Right ventricle myocardium superior (tissue), 1 donor: ENCODE measurements at regions of chr14 and their contacts with region 1.

Region 1: GRCh38 chr14:94355191-94355797 is 32.2 kb upstream of the SERPINA6 start:
- DNase-seq: peak; percentile 62
- ATAC-seq: no peak

Region 2: DNA sequence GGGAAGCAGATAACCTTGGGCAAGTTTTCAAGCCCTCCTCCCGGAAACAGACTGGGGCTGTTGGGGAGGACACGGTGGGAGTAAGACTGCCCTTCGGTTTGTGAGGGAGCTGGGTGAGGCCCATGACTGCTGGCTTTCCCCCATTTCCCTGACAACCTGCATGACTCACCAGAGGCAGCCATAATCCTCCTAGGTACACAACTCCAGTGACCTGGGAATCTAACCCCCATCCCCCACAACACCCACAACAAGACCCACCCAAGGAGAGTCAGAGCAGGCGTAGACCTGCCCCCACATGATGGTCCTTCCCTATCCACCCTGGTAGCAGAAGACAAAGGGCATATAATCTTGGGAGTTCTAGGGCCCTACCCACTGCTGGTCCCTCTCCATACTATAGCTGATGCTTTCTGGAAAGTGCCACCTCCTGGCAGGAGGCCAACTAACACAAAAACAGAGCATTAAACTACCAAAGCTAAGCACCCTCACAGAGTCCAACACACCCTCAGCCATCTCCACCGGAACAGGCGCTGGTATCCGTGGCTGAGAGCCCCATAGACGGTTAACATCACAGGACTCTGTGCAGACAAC is 289.1 kb before region 1 on chr14:
- intact Hi-C with region 1: no loop called
- DNase-seq: no peak
- ATAC-seq: peak; percentile 38

Region 3: GRCh38 chr14:94485944-94486841 is 130.9 kb after region 1 on chr14:
- intact Hi-C with region 1: loop called (anchors 5 kb)
- DNase-seq: peak; percentile 65
- ATAC-seq: peak; percentile 77